Naive thymus-derived CD4-positive, alpha-beta T cell (primary cell): ENCODE measurements at regions of chr20 and their contacts with region 1.

Region 1: GRCh38 chr20:50101281-50101680 is 11.7 kb downstream of the UBE2V1 start:
- DNase-seq: no peak
- ATAC-seq: no peak
- H3K4me3 ChIP-seq: no peak overlapping the region
- H3K4me3 Mint-ChIP-seq: peak overlapping the region in 1 of 10 donors; percentile 34
- H3K27ac ChIP-seq: no peak overlapping the region
- H3K27ac Mint-ChIP-seq: peak overlapping the region in 4 of 9 donors; percentile 15 to 71 (median 27)
- H3K4me1 ChIP-seq: peaks cover 11 to 17% of the 10 kb centered on the region in 2 donors
- H3K4me1 Mint-ChIP-seq: peaks cover 31 to 73% (median 63%) of the 10 kb centered on the region in 7 donors
- H3K27me3 ChIP-seq: no peaks in the 10 kb centered on the region
- H3K27me3 Mint-ChIP-seq: no peaks in the 10 kb centered on the region

Region 2: GRCh38 chr20:50085452-50086365 is 15.6 kb before region 1 on chr20:
- CTCF ChIA-PET with region 1: interaction called, 4 read pairs
- POLR2A ChIA-PET with region 1: interaction called, 4 read pairs
- intact Hi-C with region 1: loop called in 1 of 2 experiments (anchors 2 kb)
- DNase-seq: peak in 7 of 9 donors; percentile 29 to 63 (median 50)
- ATAC-seq: peak; percentile 87
- H3K4me3 ChIP-seq: peak overlapping the region; percentile 63
- H3K4me3 Mint-ChIP-seq: peak overlapping the region; percentile 75 to 91 (median 86)
- H3K27ac ChIP-seq: peak overlapping the region; percentile 43
- H3K27ac Mint-ChIP-seq: peak overlapping the region; percentile 64 to 93 (median 85)
- H3K4me1 ChIP-seq: peaks cover 9 to 13% of the 10 kb centered on the region in 2 donors
- H3K4me1 Mint-ChIP-seq: peaks cover 20 to 43% (median 32%) of the 10 kb centered on the region in 7 donors
- H3K27me3 ChIP-seq: no peaks in the 10 kb centered on the region
- H3K27me3 Mint-ChIP-seq: no peaks in the 10 kb centered on the region